ENCODE measurements at regions of chr3 and their contacts with region 1.

Region 1: GRCh38 chr3:20340324-20340928 is 154.4 kb upstream of the SGO1 start:
- DNase-seq: peak; percentile 64
- ATAC-seq: peak; percentile 57 to 65

Region 2: GRCh38 chr3:20739814-20740213 is 399.4 kb after region 1 on chr3:
- intact Hi-C with region 1: loop called in 1 of 2 experiments (anchors 10 kb)
- DNase-seq: no peak
- ATAC-seq: peak in 1 of 2 donors; percentile 34

Region 3: GRCh38 chr3:21894459-21895340 is 1554.3 kb after region 1 on chr3:
- intact Hi-C with region 1: loop called in 1 of 2 experiments (anchors 10 kb)
- DNase-seq: no peak
- ATAC-seq: no peak

Region 4: GRCh38 chr3:22117751-22118346 is 1777.4 kb after region 1 on chr3:
- intact Hi-C with region 1: loop called in 1 of 2 experiments (anchors 5 kb)
- DNase-seq: no peak
- ATAC-seq: no peak